Activated CD4-positive, alpha-beta memory T cell treated with anti-CD3 and anti-CD28 coated beads for 36 hours (primary cell): ENCODE measurements at regions of chr5 and their contacts with region 1.

Region 1: DNA sequence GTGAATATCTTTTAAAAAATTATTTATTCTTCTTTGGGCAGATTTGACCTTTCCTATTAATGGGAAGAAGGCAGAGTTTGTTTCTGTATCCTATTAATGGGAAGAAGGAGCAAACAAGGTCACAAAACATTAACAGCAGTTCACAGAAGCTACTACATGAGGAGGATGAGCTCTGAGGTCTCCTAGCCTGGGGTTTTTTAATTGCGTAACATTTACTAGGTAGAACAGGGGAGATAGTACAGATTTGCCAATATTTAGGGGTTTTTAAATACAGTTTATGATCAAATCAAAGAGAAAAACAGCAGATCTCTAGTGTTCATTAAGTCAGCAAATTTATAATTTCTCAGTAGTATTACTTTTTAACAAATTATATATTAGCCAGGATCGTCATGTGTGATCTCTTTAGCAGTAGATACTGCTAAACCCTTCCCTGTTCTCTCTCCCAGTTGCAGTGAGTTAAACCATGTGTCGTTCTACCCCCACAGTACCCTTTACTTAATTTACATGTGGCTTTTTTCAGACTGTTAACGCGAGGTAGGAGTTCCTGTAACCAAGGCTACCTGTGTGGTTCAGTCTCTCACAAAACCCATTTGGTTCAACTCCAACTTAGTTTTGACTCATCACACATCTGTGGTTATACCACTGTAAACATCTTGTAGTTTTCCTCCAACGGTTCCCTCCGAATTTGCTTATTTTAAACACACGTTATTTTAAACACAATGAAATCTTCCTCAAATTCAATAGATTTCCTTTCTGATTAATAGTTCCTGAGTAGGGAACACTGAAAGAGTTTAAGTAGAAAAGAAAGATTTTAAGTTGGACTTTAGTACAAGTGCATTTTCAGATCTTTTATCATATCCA is 13.3 kb downstream of the SLC25A46 start:
- DNase-seq: peak; percentile 50
- H3K4me3 Mint-ChIP-seq: peak overlapping the region; percentile 62
- H3K27ac Mint-ChIP-seq: peak overlapping the region; percentile 88
- H3K4me1 Mint-ChIP-seq: peaks cover 46% of the 10 kb centered on the region
- H3K27me3 Mint-ChIP-seq: no peaks in the 10 kb centered on the region

Region 2: GRCh38 chr5:110726249-110727024 is 25.7 kb before region 1 on chr5 and contains the start of gene TMEM232:
- CTCF ChIA-PET with region 1: interaction called, 9 read pairs
- POLR2A ChIA-PET with region 1: no interaction called
- intact Hi-C with region 1: loop called (anchors 1 kb)
- DNase-seq: peak; percentile 86
- H3K4me3 Mint-ChIP-seq: peak within 1 kb of the TSS; percentile 83
- H3K27ac Mint-ChIP-seq: peak within 1 kb of the TSS; percentile 33
- H3K4me1 Mint-ChIP-seq: peaks cover 3% of the 10 kb centered on the region
- H3K27me3 Mint-ChIP-seq: no peaks in the 10 kb centered on the region
- total RNA-seq, gene TMEM232: 0.74 to 0.92 TPM

Region 3: GRCh38 chr5:110865400-110866094 is 113.4 kb after region 1 on chr5:
- CTCF ChIA-PET with region 1: interaction called, 4 read pairs
- POLR2A ChIA-PET with region 1: no interaction called
- intact Hi-C with region 1: loop called (anchors 1 kb)
- DNase-seq: peak; percentile 13
- H3K4me3 Mint-ChIP-seq: no peak overlapping the region
- H3K27ac Mint-ChIP-seq: no peak overlapping the region
- H3K4me1 Mint-ChIP-seq: no peaks in the 10 kb centered on the region
- H3K27me3 Mint-ChIP-seq: peaks cover 7% of the 10 kb centered on the region

Region 4: GRCh38 chr5:111223889-111224563 is 471.9 kb after region 1 on chr5 and contains the start of gene CAMK4:
- CTCF ChIA-PET with region 1: no interaction called
- POLR2A ChIA-PET with region 1: no interaction called
- intact Hi-C with region 1: loop called (anchors 2 kb)
- DNase-seq: peak; percentile 77
- H3K4me3 Mint-ChIP-seq: peak within 1 kb of the TSS; percentile 89
- H3K27ac Mint-ChIP-seq: peak within 1 kb of the TSS; percentile 90
- H3K4me1 Mint-ChIP-seq: peaks cover 34% of the 10 kb centered on the region
- H3K27me3 Mint-ChIP-seq: no peaks in the 10 kb centered on the region
- total RNA-seq, gene CAMK4: 33.3 to 36.5 TPM

Region 5: GRCh38 chr5:111254613-111255012 is 502.5 kb after region 1 on chr5:
- CTCF ChIA-PET with region 1: no interaction called
- POLR2A ChIA-PET with region 1: interaction called, 4 read pairs
- intact Hi-C with region 1: loop called (anchors 1 kb)
- DNase-seq: peak; percentile 89
- H3K4me3 Mint-ChIP-seq: peak overlapping the region; percentile 57
- H3K27ac Mint-ChIP-seq: peak overlapping the region; percentile 85
- H3K4me1 Mint-ChIP-seq: peaks cover 92% of the 10 kb centered on the region
- H3K27me3 Mint-ChIP-seq: no peaks in the 10 kb centered on the region